Activated naive CD4-positive, alpha-beta T cell treated with anti-CD3 and anti-CD28 coated beads, Interleukin-2, amount 10 ng/mL, durations not matched to agents 7 days and 5 days (primary cell): ENCODE measurements at regions of chr14 and their contacts with region 1.

Region 1: DNA sequence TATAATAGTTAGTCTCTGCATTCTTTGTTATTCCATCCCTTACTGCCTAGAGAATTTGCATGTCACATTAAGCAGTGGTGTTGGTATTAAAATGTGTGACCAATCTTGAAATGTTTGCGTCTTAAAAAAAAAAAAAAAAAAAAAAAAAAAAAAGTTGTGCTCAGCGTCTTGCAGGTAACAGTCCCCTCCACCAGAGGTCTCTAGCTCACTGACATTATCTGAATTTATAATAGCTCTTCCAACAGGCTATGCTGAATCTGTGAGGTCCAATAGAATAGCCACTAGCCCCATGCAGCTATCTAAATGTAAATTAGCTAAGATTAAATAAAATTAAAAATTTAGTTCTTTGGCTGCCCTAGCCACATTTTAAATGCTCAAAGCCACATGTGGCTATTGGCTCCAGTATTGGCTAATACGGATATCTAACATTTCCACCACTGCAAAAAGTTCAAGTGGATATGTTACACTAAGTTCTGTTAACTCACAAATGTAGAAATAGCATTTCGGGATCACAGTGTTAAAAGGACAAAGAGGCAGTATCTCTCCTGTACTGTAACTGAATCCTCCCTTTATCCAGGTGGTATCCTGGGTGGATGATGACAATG is 28.7 kb downstream of the NKX2-8 start:
- DNase-seq: no peak
- H3K4me3 Mint-ChIP-seq: no peak overlapping the region
- H3K27ac Mint-ChIP-seq: no peak overlapping the region
- H3K4me1 Mint-ChIP-seq: no peaks in the 10 kb centered on the region
- H3K27me3 Mint-ChIP-seq: peaks cover 4% of the 10 kb centered on the region

Region 2: DNA sequence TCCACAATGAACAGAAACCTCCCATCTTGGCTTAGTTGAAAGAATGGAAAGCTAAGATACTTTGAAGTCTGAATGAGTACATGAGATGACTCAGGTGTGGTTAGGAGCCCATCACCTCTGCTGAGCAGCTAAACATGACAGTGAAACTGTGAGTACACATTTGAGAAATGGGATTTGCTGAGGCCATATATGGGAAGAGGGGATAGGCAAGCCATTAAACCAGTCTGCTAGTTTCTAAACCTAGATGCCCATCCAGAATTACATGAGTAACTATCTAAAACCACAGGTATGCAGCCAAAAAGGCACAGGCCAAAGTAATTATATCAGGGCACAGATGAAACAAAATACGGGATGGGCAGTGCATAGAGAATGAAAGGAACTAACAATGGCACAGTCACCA is 75.0 kb before region 1 on chr14:
- CTCF ChIA-PET with region 1: no interaction called
- DNase-seq: no peak
- H3K4me3 Mint-ChIP-seq: no peak overlapping the region
- H3K27ac Mint-ChIP-seq: no peak overlapping the region
- H3K4me1 Mint-ChIP-seq: no peaks in the 10 kb centered on the region
- H3K27me3 Mint-ChIP-seq: no peaks in the 10 kb centered on the region

Region 3: GRCh38 chr14:36570065-36570464 is 16.3 kb after region 1 on chr14:
- CTCF ChIA-PET with region 1: no interaction called
- DNase-seq: no peak
- H3K4me3 Mint-ChIP-seq: no peak overlapping the region
- H3K27ac Mint-ChIP-seq: no peak overlapping the region
- H3K4me1 Mint-ChIP-seq: no peaks in the 10 kb centered on the region
- H3K27me3 Mint-ChIP-seq: peaks cover 3% of the 10 kb centered on the region

Region 4: GRCh38 chr14:36604757-36605505 is 51.2 kb after region 1 on chr14:
- CTCF ChIA-PET with region 1: interaction called, 16 read pairs
- DNase-seq: peak; percentile 55
- H3K4me3 Mint-ChIP-seq: no peak overlapping the region
- H3K27ac Mint-ChIP-seq: no peak overlapping the region
- H3K4me1 Mint-ChIP-seq: no peaks in the 10 kb centered on the region
- H3K27me3 Mint-ChIP-seq: peaks cover 8% of the 10 kb centered on the region